HCT116 (cell line): ENCODE measurements at regions of chr1 and their contacts with region 1.

Region 1: GRCh38 chr1:1115786-1116700 is at the start of gene C1orf159:
- DNase-seq: peak; percentile 94
- ATAC-seq: peak; percentile 96
- H3K4me3 ChIP-seq: peak within 1 kb of the TSS; percentile 63 to 74
- H3K27ac ChIP-seq: peak within 1 kb of the TSS; percentile 64; the same call in 1 of the 2 replicates
- H3K4me1 ChIP-seq: peaks cover 3 to 9% of the 10 kb centered on the region in 2 experiments; a peak in 3 of 4 replicates
- H3K27me3 ChIP-seq: no peaks in the 10 kb centered on the region
- CTCF ChIP-seq: no peak
- POLR2A ChIP-seq: no peak
- RAD21 ChIP-seq: no peak
- total RNA-seq, gene C1orf159: 22.7 TPM

Region 2: GRCh38 chr1:975896-976683 is 140.0 kb before region 1 on chr1:
- CTCF ChIA-PET with region 1: no interaction called
- POLR2A ChIA-PET with region 1: no interaction called
- RAD21 ChIA-PET with region 1: no interaction called
- intact Hi-C with region 1: loop called (anchors 5 kb)
- DNase-seq: peak; percentile 41
- ATAC-seq: peak; percentile 85
- H3K4me3 ChIP-seq: peak overlapping the region; percentile 46 to 58
- H3K27ac ChIP-seq: peak overlapping the region; percentile 93
- H3K4me1 ChIP-seq: peaks cover 10 to 22% of the 10 kb centered on the region in 2 experiments
- H3K27me3 ChIP-seq: no peaks in the 10 kb centered on the region
- CTCF ChIP-seq: peak in 2 of 3 experiments; percentile 36 to 59; a peak in 4 of 6 replicates
- POLR2A ChIP-seq: no peak
- RAD21 ChIP-seq: peak; percentile 71